Endothelial cell of umbilical vein (primary cell): ENCODE measurements at regions of chr3 and their contacts with region 1.

Region 1: GRCh38 chr3:138834359-138835212 is at the start of gene PIK3CB:
- DNase-seq: peak; percentile 85
- H3K4me3 ChIP-seq: peak within 1 kb of the TSS; percentile 65 to 82 (median 80)
- H3K27ac ChIP-seq: peak within 1 kb of the TSS; percentile 91
- H3K4me1 ChIP-seq: peaks cover 16% of the 10 kb centered on the region
- H3K27me3 ChIP-seq: no peaks in the 10 kb centered on the region
- CTCF ChIP-seq: peak; percentile 11 to 41
- POLR2A ChIP-seq: peak; percentile 87
- total RNA-seq, gene PIK3CB: 28.4 and 29.8 TPM in 2 replicates

Region 2: GRCh38 chr3:138694287-138695007 is 140.1 kb before region 1 on chr3:
- CTCF ChIA-PET with region 1: interaction called, 3 read pairs
- POLR2A ChIA-PET with region 1: no interaction called
- dilution Hi-C with region 1: no loop called
- intact Hi-C with region 1: loop called (anchors 5 kb)
- DNase-seq: peak; percentile 58
- H3K4me3 ChIP-seq: no peak overlapping the region
- H3K27ac ChIP-seq: no peak overlapping the region
- H3K4me1 ChIP-seq: no peaks in the 10 kb centered on the region
- H3K27me3 ChIP-seq: no peaks in the 10 kb centered on the region
- CTCF ChIP-seq: no peak
- POLR2A ChIP-seq: no peak

Region 3: GRCh38 chr3:138774529-138775253 is 59.9 kb before region 1 on chr3:
- CTCF ChIA-PET with region 1: no interaction called
- POLR2A ChIA-PET with region 1: no interaction called
- dilution Hi-C with region 1: no loop called
- intact Hi-C with region 1: loop called (anchors 1 kb)
- DNase-seq: peak; percentile 94
- H3K4me3 ChIP-seq: no peak overlapping the region
- H3K27ac ChIP-seq: peak overlapping the region; percentile 63
- H3K4me1 ChIP-seq: peaks cover 17% of the 10 kb centered on the region
- H3K27me3 ChIP-seq: no peaks in the 10 kb centered on the region
- CTCF ChIP-seq: no peak
- POLR2A ChIP-seq: no peak

Region 4: GRCh38 chr3:138824114-138824506 is 10.5 kb before region 1 on chr3:
- CTCF ChIA-PET with region 1: interaction called, 4 read pairs
- POLR2A ChIA-PET with region 1: no interaction called
- dilution Hi-C with region 1: no loop called
- intact Hi-C with region 1: loop called (anchors 1 kb)
- DNase-seq: no peak
- H3K4me3 ChIP-seq: no peak overlapping the region
- H3K27ac ChIP-seq: peak overlapping the region; percentile 71
- H3K4me1 ChIP-seq: peaks cover 10% of the 10 kb centered on the region
- H3K27me3 ChIP-seq: no peaks in the 10 kb centered on the region
- CTCF ChIP-seq: no peak
- POLR2A ChIP-seq: no peak

Region 5: GRCh38 chr3:138875754-138876664 is 41.4 kb after region 1 on chr3:
- CTCF ChIA-PET with region 1: no interaction called
- POLR2A ChIA-PET with region 1: no interaction called
- dilution Hi-C with region 1: no loop called
- intact Hi-C with region 1: loop called (anchors 2 kb)
- DNase-seq: peak; percentile 86
- H3K4me3 ChIP-seq: no peak overlapping the region
- H3K27ac ChIP-seq: peak overlapping the region; percentile 79
- H3K4me1 ChIP-seq: peaks cover 13% of the 10 kb centered on the region
- H3K27me3 ChIP-seq: no peaks in the 10 kb centered on the region
- CTCF ChIP-seq: no peak
- POLR2A ChIP-seq: no peak

Region 6: GRCh38 chr3:139187650-139188049 is 353.1 kb after region 1 on chr3:
- CTCF ChIA-PET with region 1: no interaction called
- POLR2A ChIA-PET with region 1: no interaction called
- dilution Hi-C with region 1: no loop called
- intact Hi-C with region 1: no loop called
- DNase-seq: no peak
- H3K4me3 ChIP-seq: no peak overlapping the region
- H3K27ac ChIP-seq: no peak overlapping the region
- H3K4me1 ChIP-seq: no peaks in the 10 kb centered on the region
- H3K27me3 ChIP-seq: no peaks in the 10 kb centered on the region
- CTCF ChIP-seq: no peak
- POLR2A ChIP-seq: no peak